HAP-1 (cell line): ENCODE measurements at regions of chr5 and their contacts with region 1.

Region 1: DNA sequence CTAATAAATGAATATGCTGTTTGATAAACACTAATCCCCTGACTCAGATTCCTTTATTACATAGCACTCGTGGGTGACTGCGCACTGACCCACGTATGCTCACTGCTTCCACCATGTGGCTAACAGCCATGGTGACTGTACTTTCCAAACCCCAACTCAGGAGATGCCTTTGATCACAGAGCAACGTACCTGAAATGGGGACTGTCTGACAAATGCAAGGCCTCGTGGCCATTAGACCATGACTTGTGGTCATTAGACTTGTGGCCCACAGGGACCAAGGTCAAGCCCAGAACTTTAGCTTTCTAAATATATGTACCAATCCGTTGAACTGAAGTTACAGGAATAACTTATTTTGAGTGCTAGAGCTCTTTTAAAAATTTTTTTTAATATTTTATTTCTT is 46.6 kb downstream of the CYFIP2 start:
- DNase-seq: peak in 1 of 2 experiments; percentile 52
- H3K4me3 ChIP-seq: no peak overlapping the region
- H3K4me1 ChIP-seq: no peaks in the 10 kb centered on the region
- H3K27me3 ChIP-seq: no peaks in the 10 kb centered on the region

Region 2: DNA sequence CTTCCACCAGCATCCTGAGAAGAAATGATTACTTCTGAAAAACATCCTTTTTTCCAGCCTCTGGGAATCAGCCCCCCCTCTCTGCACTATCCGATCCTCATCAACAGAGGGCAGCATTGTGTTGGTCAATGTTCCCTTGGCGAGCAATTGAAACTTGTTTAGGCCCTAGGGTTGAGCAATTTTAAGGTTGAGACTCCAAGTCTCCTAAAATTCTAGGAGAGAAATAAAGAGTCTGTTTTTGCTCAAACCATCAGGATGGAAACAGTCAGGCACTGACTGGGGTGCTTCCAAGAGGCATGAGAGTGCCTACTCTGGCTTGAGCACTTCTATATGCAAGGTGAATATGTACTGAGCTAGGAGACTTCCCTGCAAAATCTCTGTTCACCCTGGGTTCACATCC is 58.9 kb before region 1 on chr5:
- in situ Hi-C with region 1: loop called (anchors 10 kb)
- DNase-seq: peak; percentile 20 to 69
- H3K4me3 ChIP-seq: no peak overlapping the region
- H3K4me1 ChIP-seq: no peaks in the 10 kb centered on the region
- H3K27me3 ChIP-seq: no peaks in the 10 kb centered on the region